ENCODE measurements at regions of chr3 and their contacts with region 1.

Region 1: GRCh38 chr3:41216993-41217392 is 17.7 kb downstream of the CTNNB1 start:
- DNase-seq: no peak
- ATAC-seq: peak in 2 of 4 experiments; percentile 17 to 23
- H3K4me3 ChIP-seq: no peak overlapping the region
- H3K4me3 Mint-ChIP-seq: peak overlapping the region in 2 of 3 donors; percentile 0 to 39
- H3K27ac ChIP-seq: no peak overlapping the region
- H3K27ac Mint-ChIP-seq: peak overlapping the region in 1 of 2 donors; percentile 7
- H3K4me1 ChIP-seq: peaks cover 18 to 20% of the 10 kb centered on the region in 2 experiments
- H3K4me1 Mint-ChIP-seq: peaks cover 90 to 92% (median 90%) of the 10 kb centered on the region in 3 donors
- H3K27me3 ChIP-seq: no peaks in the 10 kb centered on the region
- H3K27me3 Mint-ChIP-seq: no peaks in the 10 kb centered on the region

Region 2: GRCh38 chr3:41198950-41199865 is 17.8 kb before region 1 on chr3 and contains the start of gene CTNNB1:
- CTCF ChIA-PET with region 1: interaction called in 1 of 2 experiments, 4 read pairs
- POLR2A ChIA-PET with region 1: interaction called, 4 to 17 read pairs
- DNase-seq: peak; percentile 80 to 96 (median 89)
- ATAC-seq: peak; percentile 81 to 85 (median 84)
- H3K4me3 ChIP-seq: peak within 1 kb of the TSS; percentile 89 to 99
- H3K4me3 Mint-ChIP-seq: peak within 1 kb of the TSS; percentile 86 to 95 (median 95)
- H3K27ac ChIP-seq: peak within 1 kb of the TSS; percentile 95
- H3K27ac Mint-ChIP-seq: peak within 1 kb of the TSS; percentile 92 to 94
- H3K4me1 ChIP-seq: peaks cover 13 to 35% of the 10 kb centered on the region in 2 experiments
- H3K4me1 Mint-ChIP-seq: peaks cover 35 to 49% (median 39%) of the 10 kb centered on the region in 3 donors
- H3K27me3 ChIP-seq: no peaks in the 10 kb centered on the region
- H3K27me3 Mint-ChIP-seq: no peaks in the 10 kb centered on the region
- total RNA-seq, gene CTNNB1: 147 to 180 (median 173) TPM

Region 3: GRCh38 chr3:41464401-41464800 is 247.4 kb after region 1 on chr3:
- CTCF ChIA-PET with region 1: no interaction called
- POLR2A ChIA-PET with region 1: no interaction called
- DNase-seq: no peak
- ATAC-seq: no peak
- H3K4me3 ChIP-seq: no peak overlapping the region
- H3K4me3 Mint-ChIP-seq: no peak overlapping the region
- H3K27ac ChIP-seq: no peak overlapping the region
- H3K27ac Mint-ChIP-seq: no peak overlapping the region
- H3K4me1 ChIP-seq: no peaks in the 10 kb centered on the region
- H3K4me1 Mint-ChIP-seq: no peaks in the 10 kb centered on the region
- H3K27me3 ChIP-seq: no peaks in the 10 kb centered on the region
- H3K27me3 Mint-ChIP-seq: no peaks in the 10 kb centered on the region

Measured in T-cell (primary cell).